Transverse colon (tissue), 4 donors: ENCODE measurements at regions of chr6 and their contacts with region 1.

Region 1: GRCh38 chr6:166614589-166614988 is 12.5 kb downstream of the RPS6KA2 start:
- DNase-seq: no peak
- H3K4me3 ChIP-seq: no peak overlapping the region
- H3K27ac ChIP-seq: peak overlapping the region in 3 of 4 donors; percentile 12 to 28 (median 23)
- H3K4me1 ChIP-seq: peaks cover 0 to 11% (median 2%) of the 10 kb centered on the region in 4 donors
- H3K27me3 ChIP-seq: no peaks in the 10 kb centered on the region
- CTCF ChIP-seq: no peak
- EP300 ChIP-seq: no peak
- POLR2A ChIP-seq: no peak

Region 2: DNA sequence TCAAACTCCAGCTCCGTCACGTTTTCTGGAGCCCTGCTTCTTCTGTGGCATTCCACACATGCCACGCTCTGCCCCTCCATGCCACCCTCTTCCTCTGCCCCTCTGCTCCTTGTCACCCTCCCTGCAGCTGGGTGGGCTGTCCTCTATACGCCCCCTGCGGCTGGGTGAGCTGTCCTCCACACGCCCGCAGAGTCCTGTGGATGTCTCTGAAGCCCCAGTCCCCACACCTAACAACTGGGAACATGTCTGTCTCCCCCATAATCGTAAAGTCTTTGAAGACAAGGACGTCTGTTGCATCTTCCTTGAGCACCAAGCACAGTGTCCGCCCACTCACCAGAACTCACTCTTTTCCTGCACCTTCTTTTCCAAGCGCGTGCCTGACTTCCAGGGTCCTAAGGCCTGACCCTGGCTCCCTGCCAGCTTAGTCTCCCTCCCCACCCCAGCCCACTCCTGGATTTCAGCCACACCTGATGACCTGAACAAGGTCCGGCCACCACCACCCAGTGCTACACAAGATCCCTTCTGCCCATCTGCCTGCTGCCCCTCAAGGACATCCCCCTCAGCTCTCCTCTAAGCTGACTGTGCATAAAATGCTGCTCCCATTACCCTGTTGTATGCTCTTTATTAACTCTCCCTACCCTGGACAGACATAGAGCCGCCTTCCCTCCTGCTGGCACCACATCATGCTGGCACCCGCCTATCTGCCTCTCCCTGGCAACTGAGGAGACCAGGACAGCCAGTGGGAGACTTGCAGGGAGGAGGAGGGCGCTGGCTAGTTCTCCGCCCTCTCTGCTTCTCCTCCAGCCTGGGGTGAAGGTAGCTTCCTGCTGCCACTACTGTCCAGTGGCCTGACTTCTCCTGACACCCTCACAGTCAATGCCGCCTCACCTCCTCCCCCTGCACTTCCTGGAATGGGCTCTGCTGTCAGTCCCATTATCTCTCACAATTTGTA is 295.7 kb before region 1 on chr6:
- in situ Hi-C with region 1: no loop called
- intact Hi-C with region 1: no loop called
- DNase-seq: no peak
- H3K4me3 ChIP-seq: no peak overlapping the region
- H3K27ac ChIP-seq: no peak overlapping the region
- H3K4me1 ChIP-seq: no peaks in the 10 kb centered on the region
- H3K27me3 ChIP-seq: no peaks in the 10 kb centered on the region
- CTCF ChIP-seq: no peak
- EP300 ChIP-seq: no peak
- POLR2A ChIP-seq: no peak

Region 3: GRCh38 chr6:166394036-166394892 is 220.3 kb before region 1 on chr6:
- in situ Hi-C with region 1: no loop called
- intact Hi-C with region 1: loop called (anchors 5 kb)
- DNase-seq: no peak
- H3K4me3 ChIP-seq: no peak overlapping the region
- H3K27ac ChIP-seq: no peak overlapping the region
- H3K4me1 ChIP-seq: no peaks in the 10 kb centered on the region
- H3K27me3 ChIP-seq: peaks cover 21% of the 10 kb centered on the region
- CTCF ChIP-seq: no peak
- EP300 ChIP-seq: no peak
- POLR2A ChIP-seq: no peak